ENCODE measurements at regions of chr15 and their contacts with region 1.

Region 1: GRCh38 chr15:25664761-25665160 is 198.4 kb downstream of the ATP10A start:
- DNase-seq: no peak
- ATAC-seq: peak in 1 of 8 donors; percentile 36
- H3K4me3 ChIP-seq: no peak overlapping the region
- H3K27ac ChIP-seq: no peak overlapping the region
- H3K4me1 ChIP-seq: peaks cover 0 to 2% (median 1%) of the 10 kb centered on the region in 9 donors
- H3K27me3 ChIP-seq: peaks cover 0 to 4% (median 0%) of the 10 kb centered on the region in 7 donors
- CTCF ChIP-seq: no peak

Region 2: DNA sequence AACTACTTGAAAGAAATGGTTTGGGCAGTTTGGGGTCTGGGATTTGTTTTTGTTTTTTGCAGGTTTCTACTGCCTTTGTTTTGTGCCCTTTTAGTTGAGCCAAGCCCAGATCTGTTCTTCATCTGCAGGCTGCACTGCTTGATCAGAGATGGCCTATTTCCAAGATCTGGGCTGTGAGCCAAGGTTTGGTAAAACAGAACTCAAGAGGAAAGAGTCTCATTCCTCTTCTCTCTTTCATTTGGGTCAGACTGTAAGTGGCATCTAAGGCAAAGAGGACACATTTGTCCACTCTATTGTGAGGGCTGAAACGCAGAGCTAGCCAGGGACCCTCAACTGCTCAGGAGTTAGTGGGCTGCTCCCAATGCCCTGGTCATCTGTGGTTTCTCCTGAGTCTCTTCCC is 121.6 kb before region 1 on chr15:
- intact Hi-C with region 1: no loop called
- DNase-seq: peak in 1 of 2 donors; percentile 65
- ATAC-seq: peak in 7 of 8 donors; percentile 56 to 82 (median 71)
- H3K4me3 ChIP-seq: no peak overlapping the region
- H3K27ac ChIP-seq: peak overlapping the region in 5 of 10 donors; percentile 4 to 30 (median 26)
- H3K4me1 ChIP-seq: peaks cover 5 to 18% (median 14%) of the 10 kb centered on the region in 9 donors
- H3K27me3 ChIP-seq: no peaks in the 10 kb centered on the region
- CTCF ChIP-seq: peak in 2 of 9 donors; percentile 16 to 21

Region 3: DNA sequence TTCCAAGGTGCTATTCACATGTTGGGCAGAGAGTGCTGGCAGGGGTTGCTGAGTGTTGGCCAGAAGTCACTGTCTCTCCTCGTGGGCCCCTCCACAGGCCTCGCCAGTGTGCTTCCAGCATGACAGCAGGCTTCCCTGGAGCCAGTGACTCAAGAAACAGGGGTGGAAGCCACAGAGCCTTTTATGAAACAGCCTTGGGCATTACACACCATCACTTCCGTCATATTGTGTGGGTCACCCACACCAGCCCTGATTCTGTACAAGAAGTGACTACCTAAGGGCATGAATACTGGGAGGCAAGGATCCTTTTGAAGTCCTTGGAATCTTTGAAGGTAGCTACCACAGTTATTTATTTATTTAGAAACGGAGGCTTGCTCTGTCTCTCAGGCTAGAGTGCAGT is 48.3 kb before region 1 on chr15:
- intact Hi-C with region 1: loop called in 1 of 10 experiments (anchors 5 kb)
- DNase-seq: no peak
- ATAC-seq: no peak
- H3K4me3 ChIP-seq: no peak overlapping the region
- H3K27ac ChIP-seq: no peak overlapping the region
- H3K4me1 ChIP-seq: no peaks in the 10 kb centered on the region
- H3K27me3 ChIP-seq: peaks cover 0 to 3% (median 0%) of the 10 kb centered on the region in 7 donors
- CTCF ChIP-seq: no peak

Region 4: GRCh38 chr15:25710184-25710583 is 45.4 kb after region 1 on chr15:
- intact Hi-C with region 1: no loop called
- DNase-seq: peak; percentile 25 to 61
- ATAC-seq: peak in 7 of 8 donors; percentile 38 to 85 (median 69)
- H3K4me3 ChIP-seq: no peak overlapping the region
- H3K27ac ChIP-seq: no peak overlapping the region
- H3K4me1 ChIP-seq: no peaks in the 10 kb centered on the region
- H3K27me3 ChIP-seq: no peaks in the 10 kb centered on the region
- CTCF ChIP-seq: peak; percentile 45 to 73 (median 67)